HEK293 (cell line): ENCODE measurements at regions of chr11 and their contacts with region 1.

Region 1: DNA sequence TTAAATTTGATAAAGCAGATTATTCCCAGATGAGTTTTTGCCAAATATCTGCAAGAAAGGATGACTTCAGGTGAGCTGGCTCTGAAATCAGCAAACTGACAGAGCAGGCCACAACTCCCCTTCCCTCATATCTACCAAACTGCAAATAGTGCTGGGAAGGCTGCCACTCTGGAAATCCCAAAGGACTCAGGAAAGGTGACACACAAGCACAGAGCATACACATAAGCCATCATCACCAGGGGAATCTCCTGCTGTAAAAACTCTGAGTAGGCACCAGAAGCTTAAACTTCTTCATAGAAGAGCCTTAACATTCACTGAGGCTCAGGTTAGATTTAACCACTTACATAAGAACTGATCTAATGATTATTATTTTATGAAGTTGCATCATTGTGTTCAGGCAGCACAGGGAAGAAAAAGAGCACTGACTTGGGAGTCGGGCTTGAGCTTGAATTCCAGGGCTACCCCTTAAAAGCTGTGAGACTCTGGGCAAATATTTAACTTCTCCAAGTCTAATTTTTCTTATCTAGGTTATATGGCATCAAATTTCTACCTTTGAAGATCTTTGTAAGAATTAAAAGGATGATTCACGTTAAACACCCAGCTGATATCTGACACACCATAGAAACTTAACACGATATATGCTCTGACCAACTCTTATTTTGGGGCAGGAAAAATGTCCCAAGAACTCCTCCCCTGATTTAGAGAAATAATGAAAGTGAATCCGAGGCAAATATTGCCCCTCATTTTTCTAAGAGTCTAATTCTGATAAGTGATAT is 15.0 kb downstream of the SYTL2 start:
- H3K4me3 ChIP-seq: no peak overlapping the region
- H3K27ac ChIP-seq: no peak overlapping the region
- H3K4me1 ChIP-seq: no peaks in the 10 kb centered on the region
- CTCF ChIP-seq: no peak

Region 2: GRCh38 chr11:85737748-85738147 is 58.2 kb before region 1 on chr11:
- CTCF ChIA-PET with region 1: no interaction called
- POLR2A ChIA-PET with region 1: no interaction called
- H3K4me3 ChIP-seq: no peak overlapping the region
- H3K27ac ChIP-seq: no peak overlapping the region
- H3K4me1 ChIP-seq: no peaks in the 10 kb centered on the region
- CTCF ChIP-seq: no peak

Region 3: GRCh38 chr11:85779956-85780640 is 15.8 kb before region 1 on chr11:
- CTCF ChIA-PET with region 1: no interaction called
- POLR2A ChIA-PET with region 1: no interaction called
- H3K4me3 ChIP-seq: no peak overlapping the region
- H3K27ac ChIP-seq: no peak overlapping the region
- H3K4me1 ChIP-seq: no peaks in the 10 kb centered on the region
- CTCF ChIP-seq: no peak

Region 4: DNA sequence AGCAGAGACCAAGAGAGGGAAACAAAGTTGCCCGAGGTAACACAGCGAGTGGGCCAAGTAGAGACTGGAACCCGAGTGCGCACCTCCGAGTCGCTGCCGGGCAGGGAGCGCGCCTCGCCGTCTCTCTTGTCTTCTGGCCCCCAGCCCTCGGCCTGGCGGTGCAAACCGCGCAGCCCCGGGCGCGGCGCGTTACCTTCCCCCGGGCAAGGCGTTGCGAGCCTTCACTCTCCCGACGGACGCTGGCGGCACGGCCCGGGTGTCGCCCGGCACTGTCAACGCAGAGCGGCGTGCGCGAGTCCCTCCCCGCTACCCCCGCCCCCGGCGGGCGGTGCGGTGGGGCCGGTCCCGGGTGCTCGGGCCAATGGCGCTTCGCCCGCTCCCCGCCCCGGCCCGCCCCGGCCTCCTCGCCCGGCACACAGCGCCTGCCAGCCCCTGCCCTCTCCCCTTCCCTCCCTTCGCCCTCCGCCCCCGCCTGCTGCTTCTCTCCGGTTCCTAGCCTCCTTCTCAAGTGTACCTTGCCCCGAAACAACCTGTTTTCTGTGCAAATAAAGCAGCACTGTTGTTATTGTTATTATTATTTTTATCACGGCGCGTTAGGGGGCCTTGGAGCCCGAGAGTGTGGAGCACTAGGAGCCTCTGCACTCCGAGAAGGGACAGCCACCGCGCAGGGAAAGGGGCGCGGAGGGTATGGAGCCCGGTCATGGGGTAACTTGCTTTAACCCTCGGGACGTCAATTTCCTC is 15.1 kb after region 1 on chr11 and contains the start of gene SYTL2:
- CTCF ChIA-PET with region 1: interaction called, 12 read pairs
- POLR2A ChIA-PET with region 1: interaction called, 5 read pairs
- H3K4me3 ChIP-seq: peak within 1 kb of the TSS; percentile 47
- H3K27ac ChIP-seq: no peak within 1 kb of the TSS
- H3K4me1 ChIP-seq: no peaks in the 10 kb centered on the region
- CTCF ChIP-seq: 0 out of 2 replicates have a peak, but pooled peaks have one; percentile 16

Region 5: DNA sequence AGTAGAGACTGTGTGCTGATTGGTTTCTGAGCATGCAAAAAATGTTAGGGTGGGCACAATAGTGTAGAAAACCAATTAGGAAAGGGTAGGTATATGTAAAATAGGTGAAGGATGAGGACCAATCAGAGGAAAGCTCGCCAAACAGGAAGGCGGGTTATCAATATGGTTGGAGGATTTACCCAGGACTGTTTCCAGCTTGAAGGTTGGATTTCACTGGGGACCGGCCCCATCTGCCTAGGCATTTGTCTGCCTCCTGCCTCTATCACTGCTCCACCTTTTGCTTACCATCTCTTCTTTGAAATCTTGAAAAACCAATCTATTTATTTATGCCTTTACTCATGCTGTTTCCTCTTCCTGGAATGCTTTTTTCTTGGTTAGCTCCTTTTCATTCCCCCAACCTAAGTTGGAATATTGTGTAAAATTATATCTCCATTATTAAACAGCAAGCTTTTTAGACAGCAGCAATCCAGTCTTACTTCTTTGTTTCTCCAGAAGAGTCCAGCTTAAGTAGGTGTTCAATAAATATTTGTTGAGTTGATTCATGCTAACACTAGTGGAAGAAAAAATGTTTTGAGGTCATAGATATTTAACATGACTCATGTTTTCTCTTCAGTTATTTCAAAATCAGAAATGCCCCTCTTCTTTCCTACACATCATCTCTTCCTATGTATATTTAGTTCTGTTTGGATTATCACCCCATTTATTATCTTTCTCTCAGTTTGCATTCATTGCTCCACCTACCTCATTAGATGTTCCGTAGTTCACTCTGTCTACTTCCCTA is 79.4 kb after region 1 on chr11:
- CTCF ChIA-PET with region 1: no interaction called
- POLR2A ChIA-PET with region 1: no interaction called
- H3K4me3 ChIP-seq: no peak overlapping the region
- H3K27ac ChIP-seq: no peak overlapping the region
- H3K4me1 ChIP-seq: no peaks in the 10 kb centered on the region
- CTCF ChIP-seq: no peak